Left colon (tissue), 2 donors: ENCODE measurements at regions of chr14 and their contacts with region 1.

Region 1: GRCh38 chr14:43282457-43282856 is 1224.6 kb downstream of the FSCB start:
- DNase-seq: no peak
- ATAC-seq: no peak

Region 2: GRCh38 chr14:43258396-43258795 is 24.1 kb before region 1 on chr14:
- intact Hi-C with region 1: loop called in 1 of 2 experiments (anchors 2 kb)
- DNase-seq: no peak
- ATAC-seq: no peak

Region 3: DNA sequence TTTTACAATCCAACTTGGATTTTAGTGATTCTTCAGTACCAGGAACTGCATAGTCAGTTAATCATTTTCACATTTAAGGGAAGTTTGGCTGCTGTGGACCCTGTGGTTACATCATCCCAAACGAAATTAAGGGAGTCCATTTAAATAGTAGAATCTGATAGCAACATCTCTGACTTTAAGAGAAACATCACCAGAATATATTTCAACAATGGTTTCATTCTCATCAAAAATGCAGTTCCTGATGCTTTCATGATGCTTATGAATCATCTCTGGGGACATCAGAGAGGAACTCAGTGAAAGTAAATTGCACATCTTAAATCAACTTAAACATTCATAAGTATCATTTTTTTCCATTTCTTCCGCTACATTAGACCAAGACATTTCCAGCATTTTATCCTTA is 53.9 kb after region 1 on chr14:
- intact Hi-C with region 1: no loop called
- DNase-seq: no peak
- ATAC-seq: no peak